CD8-positive, alpha-beta T cell (primary cell): ENCODE measurements at regions of chr14 and their contacts with region 1.

Region 1: DNA sequence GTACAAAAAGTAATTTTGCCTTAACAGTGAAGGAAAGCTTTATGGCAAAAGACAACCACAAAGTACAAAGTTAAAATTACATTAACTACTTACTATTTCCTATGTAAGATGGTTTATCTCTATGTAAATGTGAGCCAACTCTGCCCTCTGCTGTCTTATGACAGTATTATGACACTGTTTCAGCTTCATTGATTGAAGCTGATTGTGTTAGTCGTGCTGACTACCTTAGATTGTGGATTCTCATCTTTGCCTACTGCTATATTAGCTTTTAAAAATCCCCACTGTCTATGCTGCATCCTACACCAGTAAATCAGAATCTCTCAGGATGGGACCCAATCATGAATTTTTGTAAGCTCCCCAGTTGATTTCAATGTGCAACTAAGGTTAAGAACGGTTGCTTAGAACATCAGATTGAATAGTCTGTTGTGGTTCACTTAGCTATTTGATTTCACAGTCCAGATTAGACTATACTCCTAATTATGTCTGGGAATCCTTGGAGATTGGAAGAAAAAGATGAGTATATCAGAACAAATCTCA is 12.2 kb upstream of the SPTB start:
- DNase-seq: peak in 4 of 9 experiments; percentile 18 to 77 (median 50)
- ATAC-seq: peak; percentile 92
- H3K4me3 ChIP-seq: no peak overlapping the region
- H3K4me3 Mint-ChIP-seq: no peak overlapping the region
- H3K27ac ChIP-seq: no peak overlapping the region
- H3K27ac Mint-ChIP-seq: no peak overlapping the region
- H3K4me1 ChIP-seq: no peaks in the 10 kb centered on the region
- H3K4me1 Mint-ChIP-seq: no peaks in the 10 kb centered on the region
- H3K27me3 ChIP-seq: peaks cover 0 to 2% of the 10 kb centered on the region in 2 experiments
- H3K27me3 Mint-ChIP-seq: peaks cover 9% of the 10 kb centered on the region
- CTCF ChIP-seq: peak; percentile 72

Region 2: GRCh38 chr14:64671591-64671990 is 220.3 kb before region 1 on chr14:
- CTCF ChIA-PET with region 1: interaction called, 14 read pairs
- POLR2A ChIA-PET with region 1: no interaction called
- intact Hi-C with region 1: loop called (anchors 5 kb)
- DNase-seq: peak in 2 of 9 experiments; percentile 68 to 76
- ATAC-seq: peak; percentile 55
- H3K4me3 ChIP-seq: no peak overlapping the region
- H3K4me3 Mint-ChIP-seq: no peak overlapping the region
- H3K27ac ChIP-seq: no peak overlapping the region
- H3K27ac Mint-ChIP-seq: no peak overlapping the region
- H3K4me1 ChIP-seq: peaks cover 7% of the 10 kb centered on the region
- H3K4me1 Mint-ChIP-seq: peaks cover 15% of the 10 kb centered on the region
- H3K27me3 ChIP-seq: no peaks in the 10 kb centered on the region
- H3K27me3 Mint-ChIP-seq: peaks cover 2% of the 10 kb centered on the region
- CTCF ChIP-seq: peak; percentile 56

Region 3: GRCh38 chr14:64800000-64800399 is 91.9 kb before region 1 on chr14:
- CTCF ChIA-PET with region 1: interaction called, 19 read pairs
- POLR2A ChIA-PET with region 1: no interaction called
- intact Hi-C with region 1: loop called in 1 of 2 experiments (anchors 5 kb)
- DNase-seq: peak in 2 of 9 experiments; percentile 15 to 19
- ATAC-seq: no peak
- H3K4me3 ChIP-seq: no peak overlapping the region
- H3K4me3 Mint-ChIP-seq: no peak overlapping the region
- H3K27ac ChIP-seq: no peak overlapping the region
- H3K27ac Mint-ChIP-seq: no peak overlapping the region
- H3K4me1 ChIP-seq: no peaks in the 10 kb centered on the region
- H3K4me1 Mint-ChIP-seq: no peaks in the 10 kb centered on the region
- H3K27me3 ChIP-seq: no peaks in the 10 kb centered on the region
- H3K27me3 Mint-ChIP-seq: peaks cover 4% of the 10 kb centered on the region
- CTCF ChIP-seq: no peak

Region 4: DNA sequence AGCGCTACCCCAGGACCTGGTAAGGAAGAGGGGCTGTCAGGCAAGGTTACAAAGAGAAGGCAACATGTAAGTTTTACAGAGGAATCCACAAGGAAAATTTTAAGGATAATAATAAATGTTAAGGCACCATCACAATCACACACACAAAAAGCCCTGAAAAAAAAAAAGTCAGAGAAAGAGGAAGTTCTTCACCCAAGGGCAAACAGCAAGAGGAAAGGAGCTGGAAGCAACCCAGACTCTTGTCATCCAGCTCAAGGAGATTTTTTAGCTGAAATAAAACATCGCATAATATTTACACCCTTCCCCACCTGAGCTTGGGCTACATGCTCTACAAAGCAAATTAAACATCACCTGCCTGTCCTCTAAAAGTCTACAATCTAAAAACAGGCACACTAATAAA is 21.7 kb before region 1 on chr14:
- CTCF ChIA-PET with region 1: interaction called, 18 read pairs
- POLR2A ChIA-PET with region 1: no interaction called
- intact Hi-C with region 1: no loop called
- DNase-seq: no peak
- ATAC-seq: no peak
- H3K4me3 ChIP-seq: no peak overlapping the region
- H3K4me3 Mint-ChIP-seq: no peak overlapping the region
- H3K27ac ChIP-seq: no peak overlapping the region
- H3K27ac Mint-ChIP-seq: no peak overlapping the region
- H3K4me1 ChIP-seq: no peaks in the 10 kb centered on the region
- H3K4me1 Mint-ChIP-seq: no peaks in the 10 kb centered on the region
- H3K27me3 ChIP-seq: no peaks in the 10 kb centered on the region
- H3K27me3 Mint-ChIP-seq: peaks cover 33% of the 10 kb centered on the region
- CTCF ChIP-seq: no peak

Region 5: GRCh38 chr14:64906022-64906421 is 14.1 kb after region 1 on chr14:
- CTCF ChIA-PET with region 1: interaction called, 27 read pairs
- POLR2A ChIA-PET with region 1: no interaction called
- intact Hi-C with region 1: no loop called
- DNase-seq: no peak
- ATAC-seq: no peak
- H3K4me3 ChIP-seq: no peak overlapping the region
- H3K4me3 Mint-ChIP-seq: no peak overlapping the region
- H3K27ac ChIP-seq: no peak overlapping the region
- H3K27ac Mint-ChIP-seq: no peak overlapping the region
- H3K4me1 ChIP-seq: no peaks in the 10 kb centered on the region
- H3K4me1 Mint-ChIP-seq: no peaks in the 10 kb centered on the region
- H3K27me3 ChIP-seq: no peaks in the 10 kb centered on the region
- H3K27me3 Mint-ChIP-seq: peaks cover 4% of the 10 kb centered on the region
- CTCF ChIP-seq: no peak

Region 6: DNA sequence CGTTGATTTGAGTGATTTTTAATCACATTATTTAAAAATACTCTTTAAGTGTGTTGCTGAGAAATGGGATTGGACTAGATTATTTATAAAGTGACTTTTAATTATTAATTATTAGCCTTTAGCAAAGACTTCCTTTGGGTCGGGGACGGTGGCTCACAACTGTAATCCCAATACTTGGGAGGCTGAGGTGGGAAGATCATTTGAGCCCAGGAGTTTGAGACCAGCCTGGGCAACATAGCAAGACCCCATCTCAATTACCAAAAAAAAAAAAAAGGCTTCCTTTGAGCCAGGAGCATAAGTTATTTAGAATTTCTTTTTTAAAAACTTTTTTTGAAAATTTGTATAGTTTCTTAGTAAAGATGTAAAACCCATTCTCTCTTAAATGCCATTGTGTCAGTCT is 31.1 kb after region 1 on chr14:
- CTCF ChIA-PET with region 1: interaction called, 13 read pairs
- POLR2A ChIA-PET with region 1: no interaction called
- intact Hi-C with region 1: no loop called
- DNase-seq: no peak
- ATAC-seq: no peak
- H3K4me3 ChIP-seq: no peak overlapping the region
- H3K4me3 Mint-ChIP-seq: no peak overlapping the region
- H3K27ac ChIP-seq: no peak overlapping the region
- H3K27ac Mint-ChIP-seq: peak overlapping the region; percentile 60
- H3K4me1 ChIP-seq: peaks cover 53% of the 10 kb centered on the region
- H3K4me1 Mint-ChIP-seq: peaks cover 60% of the 10 kb centered on the region
- H3K27me3 ChIP-seq: no peaks in the 10 kb centered on the region
- H3K27me3 Mint-ChIP-seq: no peaks in the 10 kb centered on the region
- CTCF ChIP-seq: no peak

Region 7: DNA sequence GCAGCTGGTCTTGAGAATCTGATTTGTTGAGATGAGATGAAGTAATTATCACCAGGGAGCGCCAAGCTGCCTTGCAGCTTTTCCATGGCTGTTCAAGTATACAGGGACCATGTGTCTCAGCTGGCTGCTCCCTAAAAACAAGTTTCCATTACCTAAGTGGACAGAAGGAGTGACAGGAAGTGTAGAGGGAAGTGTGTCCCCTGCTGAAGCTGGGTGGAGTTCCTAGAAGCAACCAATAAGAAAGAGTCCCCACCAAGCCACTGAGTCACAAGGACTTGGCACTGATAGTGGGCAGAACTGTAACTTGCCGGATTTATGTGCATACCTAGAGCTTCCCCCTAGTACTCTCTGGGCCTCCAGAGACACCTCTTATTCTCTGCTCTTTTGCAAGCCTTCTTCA is 52.1 kb after region 1 on chr14:
- CTCF ChIA-PET with region 1: no interaction called
- POLR2A ChIA-PET with region 1: no interaction called
- intact Hi-C with region 1: no loop called
- DNase-seq: no peak
- ATAC-seq: no peak
- H3K4me3 ChIP-seq: no peak overlapping the region
- H3K4me3 Mint-ChIP-seq: no peak overlapping the region
- H3K27ac ChIP-seq: no peak overlapping the region
- H3K27ac Mint-ChIP-seq: peak overlapping the region; percentile 82
- H3K4me1 ChIP-seq: peaks cover 7% of the 10 kb centered on the region
- H3K4me1 Mint-ChIP-seq: peaks cover 54% of the 10 kb centered on the region
- H3K27me3 ChIP-seq: no peaks in the 10 kb centered on the region
- H3K27me3 Mint-ChIP-seq: no peaks in the 10 kb centered on the region
- CTCF ChIP-seq: no peak